Right ventricle myocardium inferior (tissue), 1 donor: ENCODE measurements at regions of chr1 and their contacts with region 1.

Region 1: GRCh38 chr1:36134505-36135329 is 9.7 kb upstream of the COL8A2 start:
- DNase-seq: no peak
- ATAC-seq: peak; percentile 66

Region 2: GRCh38 chr1:36099681-36100341 is 34.9 kb before region 1 on chr1:
- intact Hi-C with region 1: loop called (anchors 2 kb)
- DNase-seq: peak; percentile 88
- ATAC-seq: peak; percentile 79